ENCODE measurements at regions of chr7 and their contacts with region 1.

Region 1: DNA sequence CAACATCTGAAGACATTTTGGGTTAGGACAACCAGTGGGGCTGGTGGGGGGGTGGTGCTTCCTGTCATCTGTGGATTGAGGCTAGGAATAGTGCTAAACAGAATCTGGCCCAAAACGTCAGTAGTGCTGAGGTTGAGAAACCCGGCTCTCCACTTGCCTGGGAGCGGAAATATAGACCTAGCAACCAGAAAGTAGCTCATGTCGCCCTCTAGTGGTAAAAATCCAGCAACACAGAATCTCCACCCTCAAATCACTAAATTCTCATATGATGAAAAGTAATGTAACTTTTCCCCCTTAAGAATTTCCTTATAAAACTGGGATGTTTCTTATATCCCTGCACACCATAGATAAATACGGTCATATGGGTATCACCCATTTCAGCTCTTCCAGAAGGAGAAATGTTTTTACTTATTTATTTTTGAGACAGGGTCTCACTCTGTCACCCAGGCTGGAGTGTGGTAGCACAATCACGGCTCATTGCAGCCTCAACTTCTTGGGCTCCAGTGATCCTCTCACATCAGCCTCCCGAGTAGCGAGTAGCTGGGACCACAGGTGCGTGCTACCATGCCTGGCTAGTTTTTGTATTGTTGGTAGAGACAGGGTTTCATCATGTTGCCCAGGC is 34.4 kb downstream of the ZC3HAV1 start:
- DNase-seq: peak; percentile 76 to 87 (median 79)
- ATAC-seq: peak; percentile 96
- H3K4me3 ChIP-seq: no peak overlapping the region
- H3K27ac ChIP-seq: no peak overlapping the region; the same call in 2 of the 3 replicates
- H3K4me1 ChIP-seq: peaks cover 0 to 3% of the 10 kb centered on the region in 2 experiments; a peak in 2 of 5 replicates
- H3K27me3 ChIP-seq: no peaks in the 10 kb centered on the region
- CTCF ChIP-seq: peak; percentile 84 to 98 (median 94)
- EP300 ChIP-seq: peak; percentile 24; the same call in 1 of the 2 replicates
- POLR2A ChIP-seq: no peak
- RAD21 ChIP-seq: peak; percentile 81 to 83

Region 2: GRCh38 chr7:138886501-138886917 is 188.6 kb before region 1 on chr7:
- CTCF ChIA-PET with region 1: interaction called, 9 read pairs
- POLR2A ChIA-PET with region 1: interaction called, 3 read pairs
- in situ Hi-C with region 1: no loop called
- intact Hi-C with region 1: loop called (anchors 5 kb)
- DNase-seq: peak; percentile 64 to 74 (median 68)
- ATAC-seq: peak; percentile 82
- H3K4me3 ChIP-seq: no peak overlapping the region
- H3K27ac ChIP-seq: no peak overlapping the region
- H3K4me1 ChIP-seq: no peaks in the 10 kb centered on the region
- H3K27me3 ChIP-seq: peaks cover 52 to 61% of the 10 kb centered on the region in 2 experiments
- CTCF ChIP-seq: peak; percentile 63 to 93 (median 80); a peak in 5 of 6 replicates
- EP300 ChIP-seq: no peak
- POLR2A ChIP-seq: no peak
- RAD21 ChIP-seq: peak; percentile 69 to 82

Region 3: GRCh38 chr7:139016931-139017511 is 58.1 kb before region 1 on chr7:
- CTCF ChIA-PET with region 1: interaction called, 51 read pairs
- POLR2A ChIA-PET with region 1: interaction called, 3 read pairs
- in situ Hi-C with region 1: no loop called
- intact Hi-C with region 1: loop called (anchors 1 kb)
- DNase-seq: peak; percentile 81 to 87 (median 84)
- ATAC-seq: peak; percentile 97
- H3K4me3 ChIP-seq: no peak overlapping the region
- H3K27ac ChIP-seq: no peak overlapping the region
- H3K4me1 ChIP-seq: no peaks in the 10 kb centered on the region
- H3K27me3 ChIP-seq: peaks cover 25 to 27% of the 10 kb centered on the region in 2 experiments
- CTCF ChIP-seq: peak; percentile 88 to 97 (median 91)
- EP300 ChIP-seq: no peak
- POLR2A ChIP-seq: no peak
- RAD21 ChIP-seq: peak; percentile 93 to 98

Region 4: DNA sequence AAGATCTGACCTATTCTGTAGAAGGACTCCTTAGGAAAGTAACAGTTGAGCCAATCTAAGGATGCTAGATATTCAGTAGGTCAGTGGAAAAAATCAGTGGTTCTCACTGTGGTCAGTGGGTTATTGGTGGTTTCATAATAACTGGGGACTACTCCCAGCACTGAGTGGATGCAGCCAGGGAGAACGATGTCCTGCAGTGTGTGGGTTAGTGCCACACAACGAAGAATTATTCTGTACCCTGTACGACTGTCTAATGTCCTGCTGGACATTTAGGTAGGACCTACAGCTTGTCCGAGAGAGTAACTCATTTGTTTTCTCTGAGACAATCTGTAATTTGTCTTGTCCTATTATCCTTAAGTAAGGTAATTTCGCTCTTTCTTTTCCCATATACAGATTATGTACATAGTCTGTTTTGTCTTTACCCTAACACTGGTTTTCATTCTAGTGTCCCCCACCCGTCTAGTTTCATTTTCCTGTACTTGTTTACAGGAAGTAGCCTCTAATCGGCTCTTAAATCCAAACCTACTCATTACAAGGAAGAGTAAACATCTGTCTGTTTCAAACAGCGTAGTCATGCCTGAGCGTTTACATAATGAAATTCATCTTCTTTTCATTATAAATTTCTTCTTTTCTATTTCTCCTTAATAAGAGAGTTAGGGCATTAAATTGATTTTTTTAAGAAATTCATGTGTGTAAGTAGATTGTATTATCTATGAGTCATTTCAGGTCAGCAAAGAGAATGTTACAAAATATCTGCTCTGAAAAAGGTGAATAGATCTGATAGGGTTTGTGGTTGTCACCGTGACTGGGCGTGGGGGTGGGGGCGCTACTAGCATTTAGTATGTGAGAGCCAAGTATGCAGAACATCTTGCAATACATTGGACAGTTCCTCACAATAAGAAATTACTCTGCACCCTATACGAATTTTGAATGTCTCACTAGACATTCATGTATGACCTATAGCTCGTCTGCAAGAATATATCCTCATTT is 31.0 kb before region 1 on chr7:
- CTCF ChIA-PET with region 1: no interaction called
- POLR2A ChIA-PET with region 1: interaction called, 6 read pairs
- in situ Hi-C with region 1: no loop called
- intact Hi-C with region 1: loop called (anchors 2 kb)
- DNase-seq: peak; percentile 84 to 92 (median 88)
- ATAC-seq: peak; percentile 93
- H3K4me3 ChIP-seq: no peak overlapping the region
- H3K27ac ChIP-seq: peak overlapping the region; percentile 60
- H3K4me1 ChIP-seq: peaks cover 7 to 27% of the 10 kb centered on the region in 2 experiments
- H3K27me3 ChIP-seq: no peaks in the 10 kb centered on the region
- CTCF ChIP-seq: peak in 2 of 3 experiments; percentile 17 to 44; a peak in 3 of 6 replicates
- EP300 ChIP-seq: peak; percentile 97
- POLR2A ChIP-seq: no peak
- RAD21 ChIP-seq: peak; percentile 5 to 28; a peak in 2 of 4 replicates

Region 5: GRCh38 chr7:139109188-139109982 is 34.2 kb after region 1 on chr7 and contains the start of gene ZC3HAV1:
- CTCF ChIA-PET with region 1: no interaction called
- POLR2A ChIA-PET with region 1: interaction called, 3 read pairs
- in situ Hi-C with region 1: no loop called
- intact Hi-C with region 1: loop called (anchors 2 kb)
- DNase-seq: peak; percentile 85 to 94 (median 90)
- ATAC-seq: peak; percentile 91
- H3K4me3 ChIP-seq: peak within 1 kb of the TSS; percentile 87
- H3K27ac ChIP-seq: peak within 1 kb of the TSS; percentile 88
- H3K4me1 ChIP-seq: peaks cover 19 to 44% of the 10 kb centered on the region in 2 experiments
- H3K27me3 ChIP-seq: no peaks in the 10 kb centered on the region
- CTCF ChIP-seq: peak in 1 of 3 experiments; percentile 38; a peak in 5 of 6 replicates
- EP300 ChIP-seq: no peak
- POLR2A ChIP-seq: peak; percentile 93
- RAD21 ChIP-seq: peak in 1 of 2 experiments; percentile 18; a peak in 3 of 4 replicates
- polyA plus RNA-seq, gene ZC3HAV1: 11.9 to 13.4 TPM

Region 6: GRCh38 chr7:139124084-139124914 is 49.2 kb after region 1 on chr7:
- CTCF ChIA-PET with region 1: no interaction called
- POLR2A ChIA-PET with region 1: interaction called, 4 read pairs
- in situ Hi-C with region 1: no loop called
- intact Hi-C with region 1: loop called (anchors 1 kb)
- DNase-seq: peak; percentile 92 to 98 (median 96)
- ATAC-seq: peak; percentile 88
- H3K4me3 ChIP-seq: no peak overlapping the region
- H3K27ac ChIP-seq: peak overlapping the region; percentile 49; the same call in 2 of the 3 replicates
- H3K4me1 ChIP-seq: peaks cover 9 to 25% of the 10 kb centered on the region in 2 experiments; a peak in 4 of 5 replicates
- H3K27me3 ChIP-seq: no peaks in the 10 kb centered on the region
- CTCF ChIP-seq: no peak
- EP300 ChIP-seq: peak; percentile 98
- POLR2A ChIP-seq: no peak
- RAD21 ChIP-seq: peak in 1 of 2 experiments; percentile 31; a peak in 1 of 4 replicates

Measured in K562 (cell line).